PC-9 (cell line): ENCODE measurements at regions of chr12 and their contacts with region 1.

Region 1: DNA sequence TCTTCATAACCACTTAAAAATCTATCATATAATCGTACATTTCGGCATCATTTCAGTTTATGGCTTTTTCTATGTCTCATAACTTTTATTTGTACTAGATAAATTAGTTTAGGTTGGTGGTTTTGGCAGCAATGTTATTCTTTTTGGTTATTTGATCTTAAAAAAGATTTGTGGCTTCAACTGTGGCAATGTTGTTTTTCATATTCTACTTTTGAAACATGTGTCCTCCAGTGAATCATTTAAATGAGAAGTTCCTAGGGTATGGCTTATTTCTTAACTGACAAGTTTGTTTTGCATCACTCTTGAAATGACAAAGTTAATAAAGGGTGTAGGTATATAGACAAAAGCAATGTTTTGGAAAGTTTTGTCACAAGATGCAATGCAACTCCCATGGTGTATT is 11.1 kb upstream of the KITLG start:
- DNase-seq: no peak
- H3K4me3 ChIP-seq: no peak overlapping the region
- H3K27ac ChIP-seq: no peak overlapping the region
- H3K4me1 ChIP-seq: no peaks in the 10 kb centered on the region
- H3K27me3 ChIP-seq: no peaks in the 10 kb centered on the region
- CTCF ChIP-seq: no peak

Region 2: DNA sequence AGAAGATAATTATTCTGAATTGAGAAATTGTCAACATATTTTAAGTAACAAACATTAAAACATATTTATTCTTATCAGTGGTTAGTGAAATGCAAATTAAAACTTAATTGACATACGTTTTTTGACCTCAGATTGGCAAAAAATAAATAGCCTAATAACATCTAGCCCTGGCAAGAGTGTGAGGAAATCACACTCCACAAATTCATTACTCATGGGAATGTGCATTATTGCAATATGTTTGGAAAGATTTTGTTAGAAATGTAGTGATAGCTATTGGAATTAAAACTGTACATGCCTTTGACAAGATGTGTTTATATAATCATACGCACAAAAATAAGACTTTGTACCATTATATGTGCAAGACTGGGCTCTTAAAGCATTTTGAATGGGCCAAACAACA is 179.7 kb before region 1 on chr12:
- CTCF ChIA-PET with region 1: interaction called, 22 read pairs
- POLR2A ChIA-PET with region 1: no interaction called
- intact Hi-C with region 1: no loop called
- DNase-seq: no peak
- H3K4me3 ChIP-seq: no peak overlapping the region
- H3K27ac ChIP-seq: no peak overlapping the region
- H3K4me1 ChIP-seq: 0 out of 2 replicates have a peak, but pooled peaks cover 4% of the 10 kb centered on the region
- H3K27me3 ChIP-seq: no peaks in the 10 kb centered on the region
- CTCF ChIP-seq: no peak

Region 3: DNA sequence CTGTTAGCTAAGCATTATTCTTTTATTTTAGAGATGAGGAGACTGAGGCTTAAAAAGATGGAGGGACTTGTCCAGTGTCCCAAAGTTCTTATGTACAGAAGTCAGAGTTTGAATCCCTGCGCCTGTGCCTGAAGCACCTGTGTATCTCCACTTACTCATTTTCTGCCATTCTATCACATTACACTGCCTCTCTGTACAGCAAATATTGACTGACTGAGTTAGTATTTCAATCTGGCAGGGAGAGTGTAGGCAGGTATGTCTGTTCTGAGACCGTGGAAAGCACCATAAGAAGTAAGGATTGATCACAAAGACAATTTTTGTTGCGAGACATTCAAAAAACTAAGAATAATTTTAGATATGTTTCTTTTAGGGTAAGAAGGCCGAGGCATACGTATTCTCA is 173.8 kb before region 1 on chr12:
- CTCF ChIA-PET with region 1: interaction called, 12 read pairs
- POLR2A ChIA-PET with region 1: no interaction called
- intact Hi-C with region 1: no loop called
- DNase-seq: no peak
- H3K4me3 ChIP-seq: no peak overlapping the region
- H3K27ac ChIP-seq: no peak overlapping the region
- H3K4me1 ChIP-seq: no peaks in the 10 kb centered on the region
- H3K27me3 ChIP-seq: no peaks in the 10 kb centered on the region
- CTCF ChIP-seq: no peak

Region 4: GRCh38 chr12:88516811-88517210 is 74.5 kb before region 1 on chr12:
- CTCF ChIA-PET with region 1: interaction called, 17 read pairs
- POLR2A ChIA-PET with region 1: no interaction called
- intact Hi-C with region 1: no loop called
- DNase-seq: no peak
- H3K4me3 ChIP-seq: no peak overlapping the region
- H3K27ac ChIP-seq: no peak overlapping the region
- H3K4me1 ChIP-seq: no peaks in the 10 kb centered on the region
- H3K27me3 ChIP-seq: no peaks in the 10 kb centered on the region
- CTCF ChIP-seq: no peak

Region 5: GRCh38 chr12:88538250-88538649 is 53.1 kb before region 1 on chr12:
- CTCF ChIA-PET with region 1: no interaction called
- POLR2A ChIA-PET with region 1: no interaction called
- intact Hi-C with region 1: no loop called
- DNase-seq: no peak
- H3K4me3 ChIP-seq: no peak overlapping the region
- H3K27ac ChIP-seq: no peak overlapping the region
- H3K4me1 ChIP-seq: no peaks in the 10 kb centered on the region
- H3K27me3 ChIP-seq: no peaks in the 10 kb centered on the region
- CTCF ChIP-seq: no peak